SK-N-SH (cell line): ENCODE measurements at regions of chr17 and their contacts with region 1.

Region 1: DNA sequence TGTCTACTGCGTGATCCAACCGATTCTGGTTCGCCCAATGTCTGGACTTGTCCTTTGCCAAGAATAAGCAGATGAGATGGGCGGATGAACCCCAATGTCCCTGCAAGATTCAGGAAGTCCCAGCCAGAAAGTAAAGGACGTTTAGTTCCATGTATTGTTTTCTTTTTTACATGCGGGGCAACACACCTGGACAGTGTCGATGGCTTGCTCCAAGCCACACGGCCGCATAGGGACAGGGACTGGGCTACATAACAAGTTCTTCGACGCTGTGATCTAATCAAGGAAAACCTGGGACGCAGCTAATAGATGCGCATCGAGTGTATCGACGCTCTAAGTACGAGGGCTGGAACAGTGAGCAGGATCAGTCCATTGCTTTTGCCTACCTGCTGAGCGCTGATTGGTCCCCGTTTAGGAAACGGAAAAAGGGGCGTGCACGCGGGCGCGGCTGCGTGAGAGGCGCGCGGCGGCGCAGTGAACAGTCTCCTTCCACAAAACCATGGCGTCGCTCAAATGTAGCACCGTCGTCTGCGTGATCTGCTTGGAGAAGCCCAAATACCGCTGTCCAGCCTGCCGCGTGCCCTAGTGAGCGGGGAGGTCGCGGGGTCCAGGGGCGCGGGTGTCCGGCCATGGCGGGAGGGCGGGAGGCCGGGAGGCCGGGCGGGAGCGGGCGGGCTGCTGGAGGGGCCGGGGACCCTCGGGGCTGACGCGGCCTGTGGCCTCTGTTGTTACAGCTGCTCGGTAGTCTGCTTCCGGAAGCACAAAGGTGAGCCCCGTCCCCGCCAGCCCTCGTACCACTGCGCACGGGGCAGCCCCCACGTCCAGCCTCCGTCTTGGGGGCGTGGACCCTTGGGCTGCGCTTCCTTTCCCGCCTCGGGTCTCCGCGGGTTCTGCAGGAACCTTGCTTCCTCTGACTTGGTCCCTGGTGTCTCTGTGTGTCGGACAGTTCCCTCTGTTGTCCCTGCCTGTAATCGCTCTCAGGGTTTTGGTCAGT is at the start of gene ZNHIT3:
- DNase-seq: peak; percentile 95
- H3K4me3 ChIP-seq: peak within 1 kb of the TSS; percentile 75 to 99
- H3K27ac ChIP-seq: peak within 1 kb of the TSS; percentile 38 to 62; a peak in 3 of 4 replicates
- H3K4me1 ChIP-seq: peaks cover 0 to 24% of the 10 kb centered on the region in 2 experiments; a peak in 2 of 4 replicates
- H3K27me3 ChIP-seq: peaks cover 11% of the 10 kb centered on the region; the same call in 1 of the 2 replicates
- CTCF ChIP-seq: no peak
- EP300 ChIP-seq: no peak
- RAD21 ChIP-seq: no peak
- polyA plus RNA-seq, gene ZNHIT3: 59.9 and 68.5 TPM in 2 replicates

Region 2: GRCh38 chr17:36463916-36464315 is 22.6 kb before region 1 on chr17:
- CTCF ChIA-PET with region 1: interaction called, 24 read pairs
- POLR2A ChIA-PET with region 1: no interaction called
- DNase-seq: no peak
- H3K4me3 ChIP-seq: no peak overlapping the region
- H3K27ac ChIP-seq: no peak overlapping the region
- H3K4me1 ChIP-seq: no peaks in the 10 kb centered on the region
- H3K27me3 ChIP-seq: peaks cover 37% of the 10 kb centered on the region; the same call in 1 of the 2 replicates
- CTCF ChIP-seq: no peak
- EP300 ChIP-seq: no peak
- RAD21 ChIP-seq: no peak

Region 3: DNA sequence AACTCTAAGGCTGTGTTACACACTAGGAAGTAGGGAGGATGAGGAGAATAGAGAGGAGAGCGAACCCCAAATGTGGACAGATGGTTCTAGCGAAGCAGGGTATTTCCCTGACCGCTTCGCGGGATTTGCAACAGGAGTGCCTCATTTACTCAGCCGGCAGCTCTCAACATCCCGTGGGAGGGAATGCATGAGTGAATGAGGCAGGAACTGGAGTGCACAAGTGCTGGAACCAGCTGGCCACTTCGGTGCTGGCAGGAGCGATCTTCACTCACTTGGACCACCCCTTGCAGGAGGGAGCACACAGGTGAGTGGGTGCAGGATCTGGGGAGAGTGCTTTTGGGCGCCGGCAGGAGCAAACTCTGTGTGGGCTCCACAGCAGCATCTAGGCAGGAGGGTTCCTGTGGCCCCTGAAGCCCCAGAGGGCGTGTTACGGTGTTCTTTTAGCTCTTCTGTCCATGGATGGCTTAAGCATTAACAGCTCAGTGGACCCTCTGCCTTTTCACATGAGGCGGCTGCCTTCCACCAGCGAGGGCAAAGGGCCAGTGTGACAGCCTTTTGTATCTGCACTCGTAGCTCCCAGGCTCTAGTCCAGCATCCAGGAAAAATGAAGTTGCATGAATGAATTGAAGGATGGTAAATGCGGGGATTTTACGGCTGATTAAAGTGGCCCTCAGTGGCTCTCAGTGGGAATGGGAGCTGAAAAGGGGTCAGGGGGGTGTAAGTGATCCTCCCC is 17.4 kb before region 1 on chr17:
- CTCF ChIA-PET with region 1: interaction called, 24 read pairs
- POLR2A ChIA-PET with region 1: interaction called, 3 read pairs
- DNase-seq: no peak
- H3K4me3 ChIP-seq: no peak overlapping the region
- H3K27ac ChIP-seq: no peak overlapping the region
- H3K4me1 ChIP-seq: no peaks in the 10 kb centered on the region
- H3K27me3 ChIP-seq: peaks cover 36% of the 10 kb centered on the region; the same call in 1 of the 2 replicates
- CTCF ChIP-seq: no peak
- EP300 ChIP-seq: no peak
- RAD21 ChIP-seq: no peak

Region 4: GRCh38 chr17:36601303-36602029 is 115.0 kb after region 1 on chr17 and contains the start of gene MRM1:
- CTCF ChIA-PET with region 1: no interaction called
- POLR2A ChIA-PET with region 1: no interaction called
- DNase-seq: peak; percentile 98
- H3K4me3 ChIP-seq: peak within 1 kb of the TSS; percentile 85 to 90
- H3K27ac ChIP-seq: peak within 1 kb of the TSS; percentile 76 to 78
- H3K4me1 ChIP-seq: peaks cover 0 to 21% of the 10 kb centered on the region in 2 experiments; a peak in 2 of 4 replicates
- H3K27me3 ChIP-seq: no peaks in the 10 kb centered on the region
- CTCF ChIP-seq: peak; percentile 25
- EP300 ChIP-seq: no peak
- RAD21 ChIP-seq: no peak; the same call in 1 of the 2 replicates
- polyA plus RNA-seq, gene MRM1: 9.8 and 10.9 TPM in 2 replicates